ENCODE measurements at regions of chr6 and their contacts with region 1.

Region 1: DNA sequence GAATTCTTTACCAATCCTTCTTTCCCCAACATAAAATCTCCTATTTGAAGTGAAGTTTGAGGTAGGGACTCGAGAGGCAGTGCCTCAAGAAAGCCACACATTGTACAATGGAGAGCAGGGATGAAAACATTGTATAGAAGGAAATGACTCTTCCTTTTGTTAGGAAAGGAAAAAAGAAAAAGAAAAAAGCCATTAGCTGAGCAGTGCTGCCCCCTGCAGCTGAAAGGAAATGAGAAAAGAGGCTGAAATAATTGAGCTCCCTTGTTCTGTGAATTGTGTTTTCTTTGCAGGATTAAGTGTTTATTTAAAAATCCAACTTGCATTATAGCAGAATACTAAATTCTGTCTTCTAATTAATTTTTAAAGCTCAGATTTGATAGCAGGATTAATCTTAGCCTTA is 162.9 kb upstream of the SASH1 start:
- DNase-seq: no peak
- H3K4me3 ChIP-seq: no peak overlapping the region
- H3K27ac ChIP-seq: no peak overlapping the region
- H3K4me1 ChIP-seq: peaks cover 0 to 2% (median 0%) of the 10 kb centered on the region in 3 donors
- H3K27me3 ChIP-seq: no peaks in the 10 kb centered on the region
- CTCF ChIP-seq: peak; percentile 34

Region 2: GRCh38 chr6:147684906-147685305 is 494.9 kb before region 1 on chr6:
- intact Hi-C with region 1: no loop called
- DNase-seq: no peak
- H3K4me3 ChIP-seq: no peak overlapping the region
- H3K27ac ChIP-seq: no peak overlapping the region
- H3K4me1 ChIP-seq: no peaks in the 10 kb centered on the region
- H3K27me3 ChIP-seq: no peaks in the 10 kb centered on the region
- CTCF ChIP-seq: no peak

Region 3: DNA sequence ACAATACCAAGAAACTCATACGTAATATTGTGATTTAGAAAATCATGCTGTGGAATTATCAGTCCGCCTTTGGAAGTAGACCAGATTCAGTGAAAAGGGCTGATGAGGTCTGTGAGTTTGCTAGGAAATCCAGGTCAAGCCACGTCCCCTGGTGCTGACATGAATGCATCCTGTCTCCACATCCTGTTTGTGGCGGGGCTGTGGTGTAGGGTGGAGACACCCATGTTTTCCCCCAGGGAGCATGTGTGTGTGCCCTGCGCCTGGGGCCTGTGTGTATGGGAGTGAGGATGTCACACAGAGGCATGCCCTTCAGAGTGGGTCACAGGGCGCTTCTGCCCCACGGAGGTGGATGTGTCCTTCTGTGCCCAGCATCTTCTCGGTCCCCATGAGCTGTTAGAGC is 271.9 kb after region 1 on chr6:
- intact Hi-C with region 1: loop called (anchors 10 kb)
- DNase-seq: no peak
- H3K4me3 ChIP-seq: no peak overlapping the region
- H3K27ac ChIP-seq: no peak overlapping the region
- H3K4me1 ChIP-seq: no peaks in the 10 kb centered on the region
- H3K27me3 ChIP-seq: no peaks in the 10 kb centered on the region
- CTCF ChIP-seq: no peak

Measured in kidney (tissue), 22 donors.